CD14-positive monocyte (primary cell): ENCODE measurements at regions of chr12 and their contacts with region 1.

Region 1: DNA sequence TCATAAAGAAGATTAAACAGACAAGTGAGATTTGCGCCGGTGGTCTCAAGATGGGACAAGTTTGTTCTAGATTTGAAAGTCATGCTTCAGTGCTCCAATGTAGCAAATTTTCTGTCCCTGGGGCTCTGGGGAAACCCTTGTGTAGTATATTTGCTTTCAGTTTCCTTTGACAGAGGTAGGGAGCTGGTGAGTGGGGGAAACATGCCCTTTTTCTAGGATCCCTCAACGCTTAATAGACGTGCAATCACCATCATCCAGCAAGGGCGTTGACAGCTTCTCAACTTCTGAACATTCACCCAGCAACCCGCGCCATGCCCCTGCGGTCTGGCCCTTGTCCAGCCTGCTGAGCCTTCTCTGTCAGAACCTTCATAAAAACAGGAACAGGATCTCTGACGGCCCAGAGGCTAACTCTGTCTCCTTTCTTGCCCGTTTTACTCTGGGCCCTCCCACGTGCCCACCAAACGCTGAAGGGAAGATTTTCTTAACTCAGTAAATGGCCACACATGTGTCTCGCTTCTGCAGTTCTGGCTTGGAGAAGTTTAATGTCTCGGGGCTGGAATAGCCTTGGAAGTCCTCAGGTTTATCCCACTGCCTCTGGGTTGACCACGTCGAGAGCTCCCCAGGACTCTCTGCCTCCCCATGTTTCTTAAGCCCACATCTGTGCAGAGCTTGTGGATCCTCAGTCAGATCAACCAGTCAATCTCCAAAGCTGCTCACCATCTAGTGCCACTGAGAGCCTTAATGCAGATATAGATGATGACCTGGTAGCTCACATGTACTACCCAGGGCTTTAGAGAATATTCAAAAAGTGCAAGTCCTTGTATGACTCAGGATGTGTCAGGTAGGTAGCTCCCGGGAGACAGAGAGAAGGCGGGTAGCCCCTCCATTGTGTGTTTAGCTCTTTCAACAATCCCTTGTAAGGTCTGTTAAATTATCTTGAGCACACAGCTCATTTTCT is 58.1 kb upstream of the CCND2 start:
- DNase-seq: peak; percentile 96 to 97 (median 97)
- H3K4me3 ChIP-seq: peak overlapping the region; percentile 24 to 69 (median 28)
- H3K4me3 Mint-ChIP-seq: peak overlapping the region; percentile 71 to 89
- H3K27ac ChIP-seq: peak overlapping the region; percentile 83 to 97
- H3K27ac Mint-ChIP-seq: peak overlapping the region; percentile 96 to 99 (median 99)
- H3K4me1 ChIP-seq: peaks cover 56 to 58% of the 10 kb centered on the region in 2 donors
- H3K4me1 Mint-ChIP-seq: peaks cover 63% of the 10 kb centered on the region
- H3K27me3 ChIP-seq: no peaks in the 10 kb centered on the region
- H3K27me3 Mint-ChIP-seq: peaks cover 0 to 4% (median 2%) of the 10 kb centered on the region in 3 donors
- CTCF ChIP-seq: no peak

Region 2: GRCh38 chr12:3872800-3873636 is 342.5 kb before region 1 on chr12 and contains the start of gene PARP11:
- intact Hi-C with region 1: loop called in 1 of 2 experiments (anchors 2 kb)
- DNase-seq: peak; percentile 92 to 93 (median 92)
- H3K4me3 ChIP-seq: peak within 1 kb of the TSS; percentile 75 to 97 (median 97)
- H3K4me3 Mint-ChIP-seq: peak within 1 kb of the TSS; percentile 86 to 96
- H3K27ac ChIP-seq: peak within 1 kb of the TSS; percentile 97 to 98
- H3K27ac Mint-ChIP-seq: peak within 1 kb of the TSS; percentile 92 to 98 (median 97)
- H3K4me1 ChIP-seq: peaks cover 27 to 41% of the 10 kb centered on the region in 2 donors
- H3K4me1 Mint-ChIP-seq: peaks cover 37% of the 10 kb centered on the region
- H3K27me3 ChIP-seq: no peaks in the 10 kb centered on the region
- H3K27me3 Mint-ChIP-seq: peaks cover 0 to 6% (median 0%) of the 10 kb centered on the region in 3 donors
- CTCF ChIP-seq: no peak
- polyA plus RNA-seq, gene PARP11: 3.2 to 6.2 (median 5.4) TPM

Region 3: GRCh38 chr12:4172999-4173398 is 42.5 kb before region 1 on chr12:
- intact Hi-C with region 1: no loop called
- DNase-seq: no peak
- H3K4me3 ChIP-seq: no peak overlapping the region
- H3K4me3 Mint-ChIP-seq: no peak overlapping the region
- H3K27ac ChIP-seq: no peak overlapping the region
- H3K27ac Mint-ChIP-seq: no peak overlapping the region
- H3K4me1 ChIP-seq: peaks cover 25 to 30% of the 10 kb centered on the region in 2 donors
- H3K4me1 Mint-ChIP-seq: peaks cover 35% of the 10 kb centered on the region
- H3K27me3 ChIP-seq: no peaks in the 10 kb centered on the region
- H3K27me3 Mint-ChIP-seq: peaks cover 0 to 2% (median 0%) of the 10 kb centered on the region in 3 donors
- CTCF ChIP-seq: no peak

Region 4: GRCh38 chr12:4269279-4269991 is 53.9 kb after region 1 on chr12:
- intact Hi-C with region 1: loop called (anchors 2 to 5 kb)
- DNase-seq: peak; percentile 68 to 87 (median 83)
- H3K4me3 ChIP-seq: peak overlapping the region; percentile 1 to 78 (median 38)
- H3K4me3 Mint-ChIP-seq: peak overlapping the region; percentile 81 to 92
- H3K27ac ChIP-seq: peak overlapping the region in 1 of 2 donors; percentile 61
- H3K27ac Mint-ChIP-seq: peak overlapping the region in 6 of 7 donors; percentile 50 to 87 (median 80)
- H3K4me1 ChIP-seq: peaks cover 56 to 58% of the 10 kb centered on the region in 2 donors
- H3K4me1 Mint-ChIP-seq: peaks cover 38% of the 10 kb centered on the region
- H3K27me3 ChIP-seq: peaks cover 33 to 68% of the 10 kb centered on the region in 2 donors
- H3K27me3 Mint-ChIP-seq: peaks cover 50 to 77% (median 61%) of the 10 kb centered on the region in 3 donors
- CTCF ChIP-seq: peak; percentile 19

Region 5: DNA sequence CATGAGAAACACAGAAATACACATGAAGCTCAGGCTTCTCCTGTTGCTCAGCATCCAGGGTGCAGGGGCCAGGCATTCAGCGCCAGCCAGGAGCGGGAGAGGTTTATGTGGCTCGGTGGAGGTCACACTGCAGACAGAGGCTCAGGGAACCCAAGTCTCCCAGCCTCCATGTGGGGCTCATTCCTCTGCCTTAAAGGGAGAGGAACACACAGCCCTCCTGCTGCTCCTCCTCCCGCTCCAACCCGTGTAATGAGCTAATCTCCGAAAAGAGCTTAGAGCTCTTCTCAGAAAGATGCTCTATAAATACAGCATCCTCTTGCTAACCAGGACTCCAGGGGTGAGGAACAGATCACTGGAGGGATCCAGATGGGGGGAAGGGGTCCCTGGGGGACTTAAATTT is 201.9 kb after region 1 on chr12:
- intact Hi-C with region 1: no loop called
- DNase-seq: no peak
- H3K4me3 ChIP-seq: no peak overlapping the region
- H3K4me3 Mint-ChIP-seq: no peak overlapping the region
- H3K27ac ChIP-seq: no peak overlapping the region
- H3K27ac Mint-ChIP-seq: no peak overlapping the region
- H3K4me1 ChIP-seq: no peaks in the 10 kb centered on the region
- H3K4me1 Mint-ChIP-seq: peaks cover 7% of the 10 kb centered on the region
- H3K27me3 ChIP-seq: peaks cover 7 to 18% of the 10 kb centered on the region in 2 donors
- H3K27me3 Mint-ChIP-seq: peaks cover 16 to 36% (median 18%) of the 10 kb centered on the region in 3 donors
- CTCF ChIP-seq: no peak